K562 (cell line): ENCODE measurements at regions of chr5 and their contacts with region 1.

Region 1: GRCh38 chr5:4941957-4942830 is 197.9 kb upstream of the ADAMTS16 start:
- DNase-seq: peak; percentile 29 to 88 (median 80)
- ATAC-seq: peak; percentile 92
- H3K4me3 ChIP-seq: no peak overlapping the region
- H3K27ac ChIP-seq: no peak overlapping the region
- H3K4me1 ChIP-seq: 0 out of 5 replicates have a peak, but pooled peaks cover 0 to 3% of the 10 kb centered on the region in 2 experiments
- H3K27me3 ChIP-seq: peaks cover 7 to 20% of the 10 kb centered on the region in 2 experiments; a peak in 3 of 5 replicates
- CTCF ChIP-seq: peak; percentile 77 to 93 (median 80)
- EP300 ChIP-seq: no peak
- POLR2A ChIP-seq: no peak
- RAD21 ChIP-seq: peak; percentile 14 to 53; a peak in 2 of 4 replicates

Region 2: DNA sequence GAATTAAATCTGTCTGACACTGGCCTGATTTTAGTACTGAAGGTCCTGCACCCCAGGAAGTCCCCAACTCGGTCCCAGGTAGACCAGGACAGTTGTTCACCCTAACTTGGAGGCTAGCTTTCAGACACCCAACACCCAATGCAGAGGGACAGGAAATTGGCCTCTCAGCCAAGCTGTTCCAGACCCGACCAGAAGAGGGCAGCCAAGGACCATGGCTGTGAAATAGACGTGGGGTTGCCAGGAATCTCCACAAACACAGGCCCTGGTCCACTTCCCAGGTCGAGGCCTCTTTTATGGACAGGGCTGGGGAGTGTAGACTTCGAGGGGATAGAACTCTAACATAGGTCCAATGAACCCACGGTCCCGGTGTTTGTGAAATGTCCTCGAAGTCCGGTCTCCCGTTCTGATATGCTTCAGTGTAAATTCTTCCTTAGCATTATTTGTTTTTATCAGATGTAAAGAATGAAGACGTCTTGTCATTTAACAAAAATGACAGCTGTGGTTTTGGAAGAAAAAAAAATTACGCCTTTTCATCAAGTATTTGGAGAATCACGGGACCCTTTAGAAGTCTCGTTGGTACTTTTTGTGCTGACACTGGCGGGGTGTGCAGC is 62.4 kb before region 1 on chr5:
- CTCF ChIA-PET with region 1: no interaction called
- POLR2A ChIA-PET with region 1: no interaction called
- in situ Hi-C with region 1: no loop called
- intact Hi-C with region 1: loop called (anchors 2 kb)
- DNase-seq: peak; percentile 74 to 82 (median 78)
- ATAC-seq: peak; percentile 95
- H3K4me3 ChIP-seq: no peak overlapping the region
- H3K27ac ChIP-seq: no peak overlapping the region
- H3K4me1 ChIP-seq: peaks cover 0 to 3% of the 10 kb centered on the region in 2 experiments; a peak in 1 of 5 replicates
- H3K27me3 ChIP-seq: peaks cover 0 to 11% of the 10 kb centered on the region in 2 experiments; a peak in 2 of 5 replicates
- CTCF ChIP-seq: peak; percentile 88 to 98 (median 92)
- EP300 ChIP-seq: no peak
- POLR2A ChIP-seq: no peak
- RAD21 ChIP-seq: peak; percentile 86 to 94